Ascending aorta (tissue), 2 donors: ENCODE measurements at regions of chr12 and their contacts with region 1.

Region 1: GRCh38 chr12:62692884-62693283 is 226.3 kb downstream of the MON2 start:
- DNase-seq: no peak
- H3K4me3 ChIP-seq: no peak overlapping the region
- H3K27ac ChIP-seq: peak overlapping the region; percentile 62 to 80
- H3K4me1 ChIP-seq: peaks cover 3 to 19% of the 10 kb centered on the region in 2 donors
- H3K27me3 ChIP-seq: no peaks in the 10 kb centered on the region
- CTCF ChIP-seq: no peak

Region 2: DNA sequence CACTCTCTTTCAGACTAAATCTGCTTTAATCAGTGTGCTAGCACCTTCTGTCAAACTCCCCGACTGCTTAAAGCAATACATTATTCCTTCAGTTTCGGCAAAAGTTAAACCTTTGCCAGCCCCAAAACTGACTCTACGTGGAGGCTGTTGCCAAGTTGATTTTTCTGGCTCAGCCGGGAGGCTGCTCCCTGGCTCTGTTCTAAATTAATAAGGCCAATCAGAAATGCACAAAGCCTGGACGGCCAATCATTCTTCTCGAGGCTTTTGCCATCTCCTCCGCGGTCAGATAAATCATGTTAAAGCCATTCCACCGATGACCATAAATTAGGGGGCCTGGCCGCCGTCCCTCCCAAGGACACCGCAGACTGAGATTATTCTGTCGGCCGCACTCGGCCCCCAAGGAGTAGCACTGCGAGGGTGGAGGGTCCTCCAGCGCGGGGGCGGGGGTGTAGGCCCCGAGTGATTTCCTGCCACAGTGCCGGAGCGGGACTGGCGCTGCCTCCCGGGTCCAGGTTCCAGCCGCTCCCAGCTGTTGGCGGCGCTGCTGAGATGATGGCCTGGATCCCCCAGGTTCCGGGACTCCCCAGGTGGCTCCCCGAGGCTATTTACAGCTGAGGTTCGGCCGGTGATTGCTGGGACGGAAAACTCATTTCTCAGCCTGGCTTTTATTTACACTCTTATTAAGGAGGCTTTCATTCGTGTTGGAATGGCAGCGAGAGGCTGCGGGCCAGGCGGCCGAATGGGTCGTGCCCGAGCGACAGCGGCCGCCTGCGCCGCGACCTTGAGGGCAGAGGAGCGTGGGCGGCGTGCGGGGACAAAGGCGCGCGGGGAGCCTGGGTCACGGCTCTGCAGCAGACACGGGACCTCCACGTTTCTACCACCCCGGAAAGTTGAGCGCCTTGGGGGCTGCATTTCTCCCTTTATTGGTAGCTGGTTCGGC is 61.1 kb before region 1 on chr12:
- intact Hi-C with region 1: loop called (anchors 5 kb)
- DNase-seq: peak in 1 of 2 donors; percentile 84
- H3K4me3 ChIP-seq: peak overlapping the region; percentile 59 to 74
- H3K27ac ChIP-seq: peak overlapping the region; percentile 69 to 81
- H3K4me1 ChIP-seq: peaks cover 0 to 4% of the 10 kb centered on the region in 2 donors
- H3K27me3 ChIP-seq: no peaks in the 10 kb centered on the region
- CTCF ChIP-seq: peak in 2 of 3 experiments; percentile 33 to 66

Region 3: GRCh38 chr12:62767496-62767895 is 74.6 kb after region 1 on chr12:
- intact Hi-C with region 1: no loop called
- DNase-seq: no peak
- H3K4me3 ChIP-seq: no peak overlapping the region
- H3K27ac ChIP-seq: no peak overlapping the region
- H3K4me1 ChIP-seq: no peaks in the 10 kb centered on the region
- H3K27me3 ChIP-seq: no peaks in the 10 kb centered on the region
- CTCF ChIP-seq: no peak